Left cardiac atrium (tissue), 4 donors: ENCODE measurements at regions of chr3 and their contacts with region 1.

Region 1: DNA sequence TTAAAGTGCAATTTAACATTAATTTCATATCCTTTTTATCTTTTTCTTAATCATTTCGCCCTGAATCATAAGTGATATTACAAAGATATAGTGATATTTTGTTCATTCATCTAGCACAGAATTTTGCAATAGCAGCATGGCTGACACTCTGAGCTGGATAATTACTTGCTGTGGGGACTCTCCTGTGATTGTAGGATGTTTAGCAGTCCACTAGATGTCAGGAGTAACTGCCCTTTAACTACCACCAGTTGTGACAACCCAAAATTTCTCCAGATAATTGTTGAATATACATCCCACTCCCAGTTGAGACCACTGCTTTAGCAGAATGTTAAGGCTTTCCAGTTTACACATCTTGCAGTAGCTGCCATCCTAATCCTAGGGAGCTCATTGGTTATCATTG is 196.8 kb upstream of the MBNL1 start:
- DNase-seq: no peak
- ATAC-seq: peak in 1 of 2 donors; percentile 54

Region 2: GRCh38 chr3:152128356-152128755 is 56.4 kb after region 1 on chr3:
- intact Hi-C with region 1: no loop called
- DNase-seq: no peak
- ATAC-seq: no peak

Region 3: GRCh38 chr3:152524198-152525140 is 452.5 kb after region 1 on chr3:
- intact Hi-C with region 1: loop called in 1 of 2 experiments (anchors 10 kb)
- DNase-seq: no peak
- ATAC-seq: no peak